Breast epithelium (tissue), 4 donors: ENCODE measurements at regions of chr15 and their contacts with region 1.

Region 1: GRCh38 chr15:74776821-74777768 is 4.8 kb upstream of the CSK start:
- DNase-seq: no peak
- H3K4me3 ChIP-seq: no peak overlapping the region
- H3K27ac ChIP-seq: peak overlapping the region in 1 of 2 donors; percentile 58
- H3K4me1 ChIP-seq: peaks cover 0 to 13% of the 10 kb centered on the region in 2 donors
- H3K27me3 ChIP-seq: no peaks in the 10 kb centered on the region
- CTCF ChIP-seq: no peak
- POLR2A ChIP-seq: no peak

Region 2: GRCh38 chr15:74956648-74957300 is 179.7 kb after region 1 on chr15 and contains the start of gene RPP25:
- intact Hi-C with region 1: loop called (anchors 10 kb)
- DNase-seq: peak; percentile 43 to 57
- H3K4me3 ChIP-seq: peak within 1 kb of the TSS; percentile 61 to 86 (median 70)
- H3K27ac ChIP-seq: peak within 1 kb of the TSS; percentile 73 to 90
- H3K4me1 ChIP-seq: peaks cover 4 to 10% of the 10 kb centered on the region in 2 donors
- H3K27me3 ChIP-seq: no peaks in the 10 kb centered on the region
- CTCF ChIP-seq: no peak
- POLR2A ChIP-seq: no peak
- total RNA-seq, gene RPP25: 7.6 to 17.1 (median 13.1) TPM